Calu3 (cell line): ENCODE measurements at regions of chr12 and their contacts with region 1.

Region 1: DNA sequence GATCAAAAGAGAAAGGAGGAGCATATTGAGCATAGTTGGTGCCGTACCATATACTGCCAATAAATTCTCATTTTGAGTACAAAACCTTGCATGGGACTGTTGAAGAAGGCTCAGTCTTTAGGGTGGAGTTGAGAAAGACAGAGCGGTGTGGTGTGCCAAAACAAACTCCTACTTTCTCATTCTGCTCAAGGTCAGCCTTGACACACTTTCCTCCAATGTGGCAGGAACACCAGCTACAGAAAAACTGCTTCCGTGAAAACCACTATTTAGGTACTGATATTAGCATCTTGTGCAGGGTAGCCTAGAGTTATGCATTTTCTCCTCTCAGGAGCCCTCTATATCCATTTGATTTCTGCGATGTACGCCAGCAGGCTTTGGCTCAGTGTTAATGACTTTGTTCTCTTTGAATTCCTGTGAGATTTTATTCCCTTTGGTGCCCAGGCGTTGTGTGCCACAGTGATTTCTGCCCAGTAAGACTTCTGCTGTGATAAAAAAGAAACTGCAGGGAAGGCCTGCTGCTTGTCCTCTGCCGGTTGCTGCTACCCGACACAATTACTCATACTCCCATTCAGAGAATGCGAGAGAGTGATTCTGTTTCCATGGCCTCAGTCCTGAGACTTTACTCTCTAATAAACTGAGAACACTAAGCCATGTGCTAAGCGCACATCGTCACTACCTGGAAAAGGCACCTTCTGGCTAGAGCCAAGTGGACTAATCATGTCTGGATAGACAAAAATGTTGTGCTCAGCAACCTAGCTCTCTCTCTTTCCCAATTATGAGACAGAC is 88.3 kb upstream of the MDM1 start:
- DNase-seq: no peak
- H3K4me3 Mint-ChIP-seq: no peak overlapping the region
- H3K27ac Mint-ChIP-seq: no peak overlapping the region
- H3K4me1 Mint-ChIP-seq: no peaks in the 10 kb centered on the region
- H3K27me3 Mint-ChIP-seq: no peaks in the 10 kb centered on the region
- CTCF ChIP-seq: no peak

Region 2: DNA sequence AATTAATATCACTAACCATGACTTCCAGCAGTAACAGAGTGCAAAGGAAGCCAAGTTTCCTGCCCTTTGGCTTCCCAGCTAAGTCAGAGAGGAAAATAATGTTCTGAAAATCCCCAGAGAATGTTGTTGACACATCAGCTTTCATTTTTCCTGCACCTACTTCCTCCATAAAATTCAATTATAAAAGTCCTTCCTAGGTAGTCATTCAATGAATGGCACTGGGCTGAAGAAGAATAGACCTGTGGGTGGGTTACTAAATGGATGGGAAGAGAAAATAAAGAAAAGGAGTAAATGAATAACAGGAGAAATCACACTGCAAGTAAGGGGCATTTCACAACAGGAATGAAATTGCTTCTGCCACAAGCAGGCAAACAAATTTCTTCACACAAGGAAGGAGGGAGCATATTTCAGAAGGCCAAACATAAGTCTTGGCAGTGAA is 15.1 kb before region 1 on chr12:
- CTCF ChIA-PET with region 1: interaction called, 10 read pairs
- intact Hi-C with region 1: no loop called
- DNase-seq: no peak
- H3K4me3 Mint-ChIP-seq: no peak overlapping the region
- H3K27ac Mint-ChIP-seq: no peak overlapping the region
- H3K4me1 Mint-ChIP-seq: peaks cover 16% of the 10 kb centered on the region
- H3K27me3 Mint-ChIP-seq: no peaks in the 10 kb centered on the region
- CTCF ChIP-seq: no peak